ENCODE measurements at regions of chr9 and their contacts with region 1.

Region 1: DNA sequence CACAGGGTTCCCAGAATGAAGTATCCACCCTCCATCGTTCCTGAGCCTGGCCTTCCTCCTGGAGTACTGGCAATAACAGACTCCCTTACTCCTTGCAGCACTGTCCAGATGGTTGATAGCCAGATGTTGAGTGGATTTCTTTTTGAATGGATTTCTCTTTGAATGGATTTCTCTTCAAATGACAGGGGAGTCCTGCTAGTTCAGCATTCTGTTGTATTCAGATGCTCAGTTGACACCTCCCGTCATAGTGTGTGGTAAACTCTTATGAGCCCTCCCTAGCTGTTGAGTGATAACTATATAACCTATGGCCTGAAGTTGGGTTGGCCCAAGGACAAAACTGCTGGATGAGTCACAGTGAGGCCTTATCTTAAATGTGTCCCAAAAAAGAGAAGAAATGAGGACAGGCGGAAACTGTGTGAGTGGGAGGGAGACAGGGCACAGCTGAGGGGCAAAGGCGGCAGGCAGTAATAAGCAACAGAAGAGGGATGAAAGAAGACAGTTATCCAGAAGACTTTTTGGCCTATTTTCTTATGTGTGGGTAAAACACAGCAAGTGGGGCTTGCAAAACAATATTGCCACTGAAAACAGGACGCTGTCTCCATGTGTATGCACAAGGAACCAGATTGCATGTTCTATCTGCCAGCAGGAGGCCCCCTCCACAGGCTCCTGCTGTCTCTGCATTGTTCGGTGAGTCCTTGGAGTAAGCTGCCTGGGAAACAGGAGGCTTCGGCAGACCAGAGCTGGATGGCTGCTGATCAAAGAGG is 209.5 kb upstream of the S1PR3 start:
- DNase-seq: peak; percentile 49
- H3K4me3 ChIP-seq: no peak overlapping the region
- H3K27ac ChIP-seq: peak overlapping the region; percentile 75
- H3K4me1 ChIP-seq: peaks cover 52% of the 10 kb centered on the region
- H3K27me3 ChIP-seq: no peaks in the 10 kb centered on the region
- CTCF ChIP-seq: peak; percentile 67

Region 2: DNA sequence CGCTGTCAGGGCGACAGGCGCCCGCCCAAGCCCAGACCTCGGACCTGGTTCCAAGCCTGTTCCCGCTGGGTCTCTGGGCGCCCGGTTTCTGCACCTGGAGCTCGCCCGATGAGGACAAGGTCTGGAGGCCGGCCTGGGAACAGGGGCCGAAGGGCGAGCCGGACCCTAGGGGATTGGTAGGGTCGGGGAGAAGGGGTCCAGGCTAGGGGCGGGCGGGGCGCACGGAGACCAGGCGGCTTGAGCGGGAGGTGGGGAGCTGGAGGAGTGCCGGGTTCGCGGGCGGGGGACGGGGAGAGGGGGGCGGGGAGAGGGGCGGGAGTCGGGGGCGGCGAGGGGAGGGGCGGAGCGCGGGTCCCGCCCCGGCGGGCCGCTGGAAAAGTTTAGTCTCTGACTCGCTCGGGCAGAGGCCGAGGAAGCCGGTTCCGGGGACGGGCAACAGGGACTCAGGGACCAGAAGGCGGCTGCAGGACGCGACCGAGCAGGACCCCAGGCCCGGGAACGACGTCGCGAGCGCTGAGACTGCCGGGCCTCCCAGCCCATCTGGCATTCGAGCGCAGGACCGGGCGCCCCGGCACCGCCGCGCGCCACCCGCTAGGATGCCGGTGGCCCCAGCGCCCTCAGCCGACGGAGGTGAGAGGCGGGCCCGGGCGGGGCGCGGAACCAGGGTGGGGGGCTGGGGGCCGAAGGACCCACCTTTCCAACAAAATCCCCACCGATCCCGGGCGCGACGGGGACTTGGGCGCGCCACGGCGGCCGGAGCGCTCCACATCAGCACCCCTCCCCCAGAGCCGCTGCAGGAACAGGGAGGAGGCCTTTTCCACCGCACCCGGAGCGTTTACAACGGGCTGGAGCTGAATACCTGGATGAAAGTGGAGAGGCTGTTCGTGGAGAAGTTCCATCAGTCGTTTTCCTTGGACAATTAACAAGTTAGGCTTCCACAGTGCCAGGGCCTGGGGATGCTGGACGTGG is 209.5 kb after region 1 on chr9 and contains the start of gene S1PR3:
- intact Hi-C with region 1: loop called (anchors 10 kb)
- DNase-seq: peak; percentile 77
- H3K4me3 ChIP-seq: peak within 1 kb of the TSS; percentile 86
- H3K27ac ChIP-seq: peak within 1 kb of the TSS; percentile 84
- H3K4me1 ChIP-seq: peaks cover 53% of the 10 kb centered on the region
- H3K27me3 ChIP-seq: peaks cover 27% of the 10 kb centered on the region
- CTCF ChIP-seq: peak; percentile 45
- total RNA-seq, gene S1PR3: 26.8 TPM

Measured in left ventricle myocardium inferior (tissue), 1 donor.